Activated naive CD8-positive, alpha-beta T cell treated with anti-CD3 and anti-CD28 coated beads, Interleukin-2, amount 10 ng/mL, durations not matched to agents 7 days and 5 days (primary cell): ENCODE measurements at regions of chr11 and their contacts with region 1.

Region 1: DNA sequence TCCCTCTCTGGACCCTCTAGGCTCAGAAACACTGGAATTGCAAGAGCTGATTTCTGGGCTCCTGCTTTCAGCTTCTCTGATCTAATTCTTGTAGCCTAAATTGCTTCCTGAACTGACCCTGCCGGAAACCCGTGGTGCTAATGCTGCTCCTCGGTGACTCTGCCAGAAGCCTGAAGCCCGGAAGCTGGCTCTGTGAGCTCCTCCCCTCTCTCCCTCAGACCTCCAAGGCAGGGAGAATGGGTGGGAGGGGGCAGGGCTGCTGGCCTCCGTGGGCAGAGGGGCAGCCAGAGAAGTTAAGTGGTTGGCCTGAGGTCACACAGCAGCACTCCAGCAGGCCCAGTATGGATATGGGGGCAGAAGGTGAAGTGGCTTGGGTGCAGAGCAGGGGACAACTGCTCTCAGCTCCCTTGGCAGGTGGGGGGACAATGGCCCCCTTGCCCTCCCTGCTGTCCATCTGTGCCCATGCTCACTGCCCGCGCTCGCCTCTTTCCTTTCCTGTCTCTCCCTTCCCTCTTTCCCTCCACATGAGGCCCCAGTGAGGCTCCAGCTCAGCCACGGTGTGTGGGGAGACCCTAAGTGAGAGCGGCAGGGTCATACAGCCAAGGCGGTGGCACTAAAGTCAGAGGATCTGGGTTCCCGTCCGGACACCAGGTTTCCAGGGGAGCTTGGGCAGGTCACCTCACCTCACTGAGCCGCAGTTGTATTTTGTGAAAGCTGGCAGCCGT is 16.2 kb downstream of the CAPN5 start:
- DNase-seq: peak; percentile 66
- ATAC-seq: peak; percentile 96
- H3K4me3 Mint-ChIP-seq: peak overlapping the region; percentile 81
- H3K27ac Mint-ChIP-seq: peak overlapping the region; percentile 96
- H3K4me1 Mint-ChIP-seq: peaks cover 16% of the 10 kb centered on the region
- H3K27me3 Mint-ChIP-seq: peaks cover 7% of the 10 kb centered on the region

Region 2: GRCh38 chr11:76524919-76525318 is 558.1 kb before region 1 on chr11:
- POLR2A ChIA-PET with region 1: no interaction called
- DNase-seq: no peak
- ATAC-seq: no peak
- H3K4me3 Mint-ChIP-seq: no peak overlapping the region
- H3K27ac Mint-ChIP-seq: no peak overlapping the region
- H3K4me1 Mint-ChIP-seq: no peaks in the 10 kb centered on the region
- H3K27me3 Mint-ChIP-seq: no peaks in the 10 kb centered on the region

Region 3: GRCh38 chr11:76962583-76963416 is 120.2 kb before region 1 on chr11:
- POLR2A ChIA-PET with region 1: no interaction called
- DNase-seq: no peak
- ATAC-seq: peak; percentile 63
- H3K4me3 Mint-ChIP-seq: no peak overlapping the region
- H3K27ac Mint-ChIP-seq: no peak overlapping the region
- H3K4me1 Mint-ChIP-seq: peaks cover 11% of the 10 kb centered on the region
- H3K27me3 Mint-ChIP-seq: peaks cover 2% of the 10 kb centered on the region

Region 4: DNA sequence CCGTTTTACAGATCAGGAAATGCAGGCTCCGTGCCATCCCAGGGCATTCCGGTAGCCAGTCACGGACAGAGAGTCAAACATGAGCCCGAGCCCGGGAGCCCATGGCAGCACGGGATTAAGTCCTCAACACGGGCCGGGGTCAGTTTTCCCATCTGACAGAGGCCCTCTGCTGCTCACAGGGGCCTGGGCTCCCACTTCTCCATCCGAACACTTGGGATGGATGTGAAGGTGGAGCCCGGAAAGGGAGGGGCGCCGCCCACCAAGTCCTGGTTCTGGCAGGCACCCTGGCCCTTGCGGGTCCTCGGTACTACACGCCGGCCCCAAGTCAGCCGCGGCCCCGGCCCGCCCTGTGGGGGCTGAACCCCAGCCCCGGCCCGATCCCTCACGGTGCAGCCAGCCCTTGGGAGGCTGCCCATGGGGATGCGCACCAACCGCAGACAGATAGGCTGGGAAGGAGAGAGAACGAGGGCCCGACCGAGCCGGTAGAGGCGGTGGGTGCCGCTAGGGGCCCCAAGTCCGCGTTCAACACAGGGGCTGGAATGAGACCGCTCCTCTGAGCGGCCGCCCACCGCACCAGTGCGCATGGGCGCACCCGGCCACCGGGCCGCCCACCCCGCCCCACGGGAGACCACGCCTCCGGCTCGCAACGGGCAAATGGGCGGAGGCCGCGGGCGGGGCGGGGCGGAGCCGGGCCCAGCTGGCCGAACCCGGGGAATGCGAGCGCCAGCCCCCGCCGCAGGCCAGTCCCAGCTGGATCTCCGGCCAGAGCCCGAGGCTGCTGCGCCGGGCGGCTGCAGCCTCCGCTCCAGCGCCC is 16.6 kb before region 1 on chr11 and contains the start of gene CAPN5:
- POLR2A ChIA-PET with region 1: interaction called, 19 read pairs
- DNase-seq: peak; percentile 95
- ATAC-seq: peak; percentile 91
- H3K4me3 Mint-ChIP-seq: peak within 1 kb of the TSS; percentile 80
- H3K27ac Mint-ChIP-seq: peak within 1 kb of the TSS; percentile 50
- H3K4me1 Mint-ChIP-seq: peaks cover 6% of the 10 kb centered on the region
- H3K27me3 Mint-ChIP-seq: peaks cover 25% of the 10 kb centered on the region
- total RNA-seq, gene CAPN5: 2.8 to 3.8 TPM

Region 5: DNA sequence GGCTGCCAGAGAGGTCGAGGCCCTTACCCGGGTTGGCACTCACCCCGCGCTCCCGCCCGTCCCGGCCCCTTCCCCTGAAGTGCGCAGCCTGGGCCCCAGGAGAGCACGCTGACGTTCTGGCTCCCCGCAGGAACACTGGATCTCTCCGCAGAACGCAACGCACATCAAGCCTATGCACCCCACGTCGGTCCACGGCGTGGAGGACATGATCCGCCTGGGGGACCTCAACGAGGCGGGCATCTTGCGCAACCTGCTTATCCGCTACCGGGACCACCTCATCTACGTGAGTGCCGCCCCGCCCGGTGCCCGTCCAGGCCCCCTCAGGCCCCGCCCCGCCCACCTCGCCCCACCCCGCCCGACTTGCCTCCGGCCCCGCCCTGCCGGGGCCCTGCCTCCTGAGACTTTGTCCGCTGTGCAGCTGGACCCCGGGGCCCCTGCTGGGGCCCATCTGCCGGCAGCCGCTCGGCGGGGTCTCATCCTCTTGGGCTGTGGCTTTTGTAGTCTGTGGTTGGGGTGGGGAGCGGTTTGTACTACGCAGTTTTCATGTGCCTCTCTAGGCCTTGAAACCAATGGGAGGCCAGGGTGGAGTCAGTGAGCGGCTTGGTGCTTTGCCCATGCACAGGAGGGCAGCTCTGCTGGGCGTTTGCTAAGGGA is 64.8 kb after region 1 on chr11:
- POLR2A ChIA-PET with region 1: no interaction called
- DNase-seq: peak; percentile 62
- ATAC-seq: peak; percentile 46
- H3K4me3 Mint-ChIP-seq: peak overlapping the region; percentile 58
- H3K27ac Mint-ChIP-seq: no peak overlapping the region
- H3K4me1 Mint-ChIP-seq: peaks cover 29% of the 10 kb centered on the region
- H3K27me3 Mint-ChIP-seq: peaks cover 49% of the 10 kb centered on the region